PC-9 (cell line): ENCODE measurements at regions of chr2 and their contacts with region 1.

Region 1: DNA sequence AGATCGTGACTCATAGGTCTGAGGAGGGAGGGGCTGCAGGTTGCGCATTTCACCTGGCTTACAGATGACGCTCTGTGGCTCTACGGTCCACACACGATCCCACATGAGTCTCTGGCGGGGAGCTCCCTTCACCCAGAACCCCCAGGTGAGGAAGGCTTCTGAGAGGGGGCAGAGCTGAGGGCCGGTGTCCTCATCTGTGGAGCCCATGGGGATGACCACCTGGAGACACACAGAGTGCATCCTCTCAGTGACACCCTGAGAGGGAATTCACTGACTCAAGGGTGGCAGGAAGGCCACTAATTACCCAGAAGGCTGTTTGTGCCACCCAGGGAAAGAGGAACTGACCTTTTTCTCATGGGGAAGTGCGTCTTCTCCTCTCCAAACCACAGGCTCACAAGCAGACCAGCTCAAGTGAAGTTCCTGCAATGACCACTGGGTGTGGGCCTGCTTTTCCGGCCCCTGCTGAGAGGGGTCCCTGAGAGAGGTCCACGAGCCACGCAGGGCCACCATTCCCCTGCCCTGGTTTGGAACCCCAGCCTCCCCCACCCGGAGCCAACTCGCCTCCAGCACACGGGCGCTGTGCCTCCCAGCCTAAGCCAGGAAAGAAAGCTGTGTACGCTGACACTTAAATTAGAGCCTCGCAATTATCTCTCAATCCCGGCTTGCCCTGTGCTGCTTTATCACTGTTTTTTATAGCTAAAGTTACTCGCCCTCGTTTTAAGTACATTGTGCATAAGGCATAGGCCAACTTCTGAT is 114.1 kb downstream of the BCL11A start:
- DNase-seq: no peak
- H3K4me3 ChIP-seq: no peak overlapping the region
- H3K27ac ChIP-seq: no peak overlapping the region
- H3K4me1 ChIP-seq: no peaks in the 10 kb centered on the region
- H3K27me3 ChIP-seq: peaks cover 74% of the 10 kb centered on the region
- CTCF ChIP-seq: peak; percentile 42; the same call in 1 of the 2 replicates

Region 2: DNA sequence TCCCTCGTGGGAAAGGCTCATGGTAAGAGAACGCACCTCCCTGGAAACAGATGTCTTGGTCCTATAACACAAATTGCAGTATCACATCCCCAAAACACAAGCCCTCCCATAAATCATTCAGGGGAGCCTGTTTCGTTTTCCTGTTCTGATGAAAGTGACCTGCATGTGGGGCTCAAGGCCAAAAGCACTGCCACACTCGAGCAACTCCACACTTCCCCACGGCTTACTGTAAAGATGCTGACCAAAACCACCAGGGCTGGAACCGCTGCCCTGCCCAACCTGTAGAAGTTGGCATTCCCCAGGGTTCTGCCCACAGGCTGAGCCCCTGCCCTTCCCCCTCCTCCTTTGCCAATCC is 25.6 kb before region 1 on chr2:
- CTCF ChIA-PET with region 1: no interaction called
- POLR2A ChIA-PET with region 1: no interaction called
- intact Hi-C with region 1: no loop called
- DNase-seq: no peak
- H3K4me3 ChIP-seq: no peak overlapping the region
- H3K27ac ChIP-seq: no peak overlapping the region
- H3K4me1 ChIP-seq: no peaks in the 10 kb centered on the region
- H3K27me3 ChIP-seq: peaks cover 82% of the 10 kb centered on the region
- CTCF ChIP-seq: no peak

Region 3: GRCh38 chr2:60484133-60484645 is 44.8 kb after region 1 on chr2:
- CTCF ChIA-PET with region 1: no interaction called
- POLR2A ChIA-PET with region 1: no interaction called
- intact Hi-C with region 1: no loop called
- DNase-seq: no peak
- H3K4me3 ChIP-seq: no peak overlapping the region
- H3K27ac ChIP-seq: no peak overlapping the region
- H3K4me1 ChIP-seq: no peaks in the 10 kb centered on the region
- H3K27me3 ChIP-seq: peaks cover 95% of the 10 kb centered on the region
- CTCF ChIP-seq: no peak

Region 4: GRCh38 chr2:60560734-60561644 is 121.6 kb after region 1 on chr2:
- CTCF ChIA-PET with region 1: no interaction called
- POLR2A ChIA-PET with region 1: no interaction called
- intact Hi-C with region 1: no loop called
- DNase-seq: no peak
- H3K4me3 ChIP-seq: no peak overlapping the region
- H3K27ac ChIP-seq: no peak overlapping the region
- H3K4me1 ChIP-seq: no peaks in the 10 kb centered on the region
- H3K27me3 ChIP-seq: peaks cover 40% of the 10 kb centered on the region
- CTCF ChIP-seq: peak; percentile 61

Region 5: DNA sequence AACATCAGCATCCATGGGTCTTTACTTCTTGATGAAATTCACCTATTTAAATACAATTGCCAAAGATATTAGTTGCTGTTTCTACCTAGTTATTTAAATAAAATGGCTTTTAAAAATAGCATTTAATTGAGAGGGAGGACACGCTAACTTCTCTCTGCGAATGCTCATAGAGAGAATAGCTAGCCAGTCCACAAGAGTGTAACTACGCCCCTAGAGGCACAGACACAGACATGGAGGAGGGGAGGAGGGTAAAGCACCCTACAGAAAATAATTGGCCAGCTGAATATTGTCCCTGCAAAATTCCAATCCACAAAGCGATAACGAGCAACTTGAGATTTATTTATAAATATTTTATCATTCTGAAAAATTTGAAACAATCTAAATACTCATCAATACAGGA is 219.6 kb after region 1 on chr2:
- CTCF ChIA-PET with region 1: no interaction called
- POLR2A ChIA-PET with region 1: no interaction called
- intact Hi-C with region 1: loop called (anchors 10 kb)
- DNase-seq: no peak
- H3K4me3 ChIP-seq: no peak overlapping the region
- H3K27ac ChIP-seq: no peak overlapping the region
- H3K4me1 ChIP-seq: no peaks in the 10 kb centered on the region
- H3K27me3 ChIP-seq: peaks cover 90% of the 10 kb centered on the region
- CTCF ChIP-seq: 0 out of 2 replicates have a peak, but pooled peaks have one; percentile 27

Region 6: GRCh38 chr2:61109291-61109690 is 669.9 kb after region 1 on chr2:
- CTCF ChIA-PET with region 1: no interaction called
- POLR2A ChIA-PET with region 1: interaction called, 14 read pairs
- intact Hi-C with region 1: no loop called
- DNase-seq: peak in 1 of 2 experiments; percentile 86
- H3K4me3 ChIP-seq: no peak overlapping the region
- H3K27ac ChIP-seq: peak overlapping the region; percentile 51
- H3K4me1 ChIP-seq: peaks cover 19% of the 10 kb centered on the region
- H3K27me3 ChIP-seq: no peaks in the 10 kb centered on the region
- CTCF ChIP-seq: no peak